Common myeloid progenitor, CD34-positive (primary cell): ENCODE measurements at regions of chr6 and their contacts with region 1.

Region 1: GRCh38 chr6:157620566-157621343 is 202.3 kb upstream of the SNX9 start:
- DNase-seq: no peak
- H3K4me3 ChIP-seq: no peak overlapping the region
- H3K27ac ChIP-seq: no peak overlapping the region
- H3K4me1 ChIP-seq: peaks cover under 1 to 4% (median 3%) of the 10 kb centered on the region in 4 experiments
- H3K27me3 ChIP-seq: no peaks in the 10 kb centered on the region

Region 2: DNA sequence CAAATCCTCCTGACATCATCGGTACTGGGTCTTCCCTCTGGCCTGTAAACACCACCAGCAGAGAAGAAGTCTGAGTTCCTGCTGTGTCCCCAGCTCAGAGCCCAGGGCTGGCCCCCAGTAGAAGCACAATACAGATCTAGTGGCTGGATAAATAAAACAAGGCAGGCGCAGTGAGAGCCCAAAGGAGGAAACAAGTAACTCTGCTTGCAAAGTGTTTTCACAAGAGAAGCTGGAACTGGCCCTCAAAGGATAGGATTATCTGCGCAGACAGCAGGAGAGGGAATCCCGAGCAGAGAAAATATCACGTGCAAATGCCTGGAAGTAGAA is 34.7 kb before region 1 on chr6:
- CTCF ChIA-PET with region 1: no interaction called
- POLR2A ChIA-PET with region 1: no interaction called
- DNase-seq: no peak
- H3K4me3 ChIP-seq: no peak overlapping the region
- H3K27ac ChIP-seq: no peak overlapping the region
- H3K4me1 ChIP-seq: no peaks in the 10 kb centered on the region
- H3K27me3 ChIP-seq: no peaks in the 10 kb centered on the region

Region 3: DNA sequence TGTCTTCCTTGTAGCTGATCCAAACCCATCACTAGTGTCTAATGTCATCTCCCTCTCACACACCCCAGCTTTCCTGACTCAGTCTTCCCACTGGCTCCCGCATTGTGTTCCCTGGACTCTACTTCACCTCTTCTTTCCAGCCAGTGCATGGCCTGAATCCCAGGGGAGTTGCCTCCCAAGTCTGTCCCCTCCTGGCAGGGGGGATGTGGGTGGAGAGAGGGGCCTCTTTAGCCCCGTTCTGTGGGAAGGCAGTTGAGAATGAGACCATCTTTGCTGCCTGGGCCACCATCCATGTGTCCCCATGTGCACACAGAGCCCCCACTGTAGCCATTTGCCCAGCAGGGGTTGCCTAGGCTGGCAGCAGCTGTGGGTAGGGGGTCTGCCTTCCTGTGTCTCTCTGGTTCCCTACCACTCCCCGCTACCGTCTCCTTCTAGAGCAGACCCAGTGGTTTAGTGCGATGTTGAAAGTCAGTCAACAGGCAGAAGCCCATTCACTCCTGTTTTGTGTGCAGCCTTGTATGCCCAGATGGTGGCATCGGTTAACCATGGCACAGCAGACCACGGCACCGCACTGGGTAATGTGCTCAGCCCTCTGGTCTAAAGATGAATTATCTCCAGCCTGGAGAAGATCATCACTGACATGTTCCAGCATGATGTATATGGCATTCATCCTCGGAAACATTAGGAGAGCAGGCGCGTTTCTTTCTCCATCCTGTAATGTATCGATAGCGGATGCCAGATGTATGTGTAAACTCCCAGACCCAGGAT is 23.5 kb after region 1 on chr6:
- CTCF ChIA-PET with region 1: interaction called, 10 read pairs
- POLR2A ChIA-PET with region 1: no interaction called
- DNase-seq: peak in 2 of 3 donors; percentile 53 to 57
- H3K4me3 ChIP-seq: no peak overlapping the region
- H3K27ac ChIP-seq: no peak overlapping the region
- H3K4me1 ChIP-seq: peaks cover 11 to 67% (median 52%) of the 10 kb centered on the region in 4 experiments
- H3K27me3 ChIP-seq: no peaks in the 10 kb centered on the region